Posterior cingulate gyrus (tissue), 11 donors: ENCODE measurements at regions of chr2 and their contacts with region 1.

Region 1: DNA sequence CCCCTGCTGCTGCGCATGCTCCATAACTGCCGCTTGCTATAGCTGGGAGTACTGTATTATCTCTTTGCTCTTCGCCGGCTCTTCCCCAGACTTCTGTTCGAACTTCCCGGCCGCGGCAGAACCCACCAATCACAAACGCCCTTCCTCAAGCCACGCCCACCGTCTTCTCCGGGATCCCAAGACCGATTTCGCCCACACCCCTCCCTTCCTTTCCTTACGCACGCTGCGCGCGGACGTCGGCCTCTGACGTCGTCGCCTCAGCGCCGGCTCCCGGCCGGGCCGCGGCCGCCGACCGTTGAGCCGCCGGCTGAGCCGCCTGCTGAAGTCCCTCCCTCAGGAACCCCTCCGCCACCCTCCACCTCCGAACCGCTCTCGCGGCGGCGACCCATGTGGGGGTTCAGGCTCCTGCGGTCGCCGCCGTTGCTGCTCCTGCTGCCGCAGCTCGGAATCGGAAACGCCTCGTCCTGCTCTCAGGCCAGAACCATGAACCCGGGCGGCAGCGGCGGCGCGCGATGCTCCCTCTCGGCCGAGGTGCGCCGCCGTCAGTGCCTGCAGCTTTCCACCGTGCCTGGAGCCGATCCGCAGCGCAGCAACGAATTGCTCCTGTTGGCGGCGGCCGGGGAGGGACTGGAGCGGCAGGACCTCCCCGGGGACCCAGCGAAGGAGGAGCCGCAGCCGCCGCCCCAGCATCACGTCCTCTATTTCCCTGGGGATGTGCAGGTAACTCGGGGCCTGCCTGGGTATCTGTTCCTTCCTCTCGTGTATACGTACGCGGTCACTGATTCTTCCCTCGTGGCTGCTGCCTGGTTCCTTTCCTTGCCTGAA is at the start of gene C2orf69:
- DNase-seq: peak; percentile 94 to 100 (median 97)

Region 2: DNA sequence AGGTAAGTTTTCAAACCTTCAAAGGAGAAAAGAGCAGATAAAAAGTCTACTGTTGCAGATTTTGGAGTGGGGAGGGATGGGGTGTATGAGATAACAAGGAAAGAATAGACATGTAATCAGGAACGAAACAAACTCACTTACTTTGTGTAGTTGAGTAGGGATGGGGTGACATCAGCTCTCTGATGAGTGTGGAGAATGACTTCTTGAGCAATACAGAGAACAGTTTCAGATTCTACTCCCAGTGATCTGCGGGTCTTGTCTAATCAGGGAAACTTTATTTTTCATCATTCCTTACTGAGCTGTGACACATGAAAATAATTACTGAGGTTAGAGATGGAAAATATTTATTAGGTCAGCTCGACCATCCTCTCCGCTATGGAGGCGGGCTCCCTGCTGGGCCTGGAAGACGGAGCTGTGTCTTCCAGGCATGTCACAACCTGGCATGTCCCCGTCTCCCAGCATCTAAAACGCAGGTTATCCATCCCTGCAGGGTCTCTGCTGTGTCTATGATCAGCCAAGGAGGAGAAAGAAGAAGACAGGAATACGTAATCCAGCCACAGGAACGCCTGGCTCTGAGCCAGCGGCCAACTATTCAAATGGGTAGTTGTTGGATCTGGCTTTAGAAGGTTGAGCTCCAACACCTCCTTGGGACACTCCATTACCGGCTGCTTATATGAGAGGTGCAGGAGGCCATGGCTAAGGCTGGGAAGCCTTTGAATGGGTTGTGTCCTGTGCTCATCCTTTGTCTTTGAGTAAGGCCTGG is 354.6 kb before region 1 on chr2:
- intact Hi-C with region 1: no loop called
- DNase-seq: no peak

Region 3: DNA sequence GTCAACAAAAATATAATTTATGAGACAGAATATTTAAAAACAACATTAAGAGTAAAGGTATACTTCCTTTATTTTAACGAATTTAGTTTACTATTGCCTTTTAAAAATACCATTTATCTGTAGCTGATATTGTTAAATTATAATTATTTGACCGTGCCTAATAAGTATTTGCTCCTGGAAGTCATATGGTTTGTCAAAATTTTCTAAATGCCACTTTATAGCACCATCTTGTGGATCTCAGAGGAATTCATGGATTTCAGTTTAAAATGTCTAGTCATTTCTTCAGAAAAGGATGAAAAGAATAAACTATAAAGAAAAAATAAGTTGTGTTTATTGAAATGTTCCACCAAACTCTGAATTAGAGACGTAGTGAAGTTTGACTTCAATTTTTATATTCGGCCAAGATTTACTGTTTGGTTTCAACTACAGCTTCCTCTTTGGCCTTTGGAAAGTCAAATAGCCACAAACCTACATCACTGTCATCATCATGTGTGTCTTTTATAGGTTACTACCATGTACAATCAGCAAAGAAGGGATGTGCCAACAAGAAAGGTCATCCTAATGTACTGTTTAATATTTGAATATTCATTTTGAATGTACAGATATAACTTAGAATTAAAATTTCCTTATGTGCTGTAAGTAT is 50.0 kb before region 1 on chr2:
- intact Hi-C with region 1: no loop called
- DNase-seq: no peak

Region 4: GRCh38 chr2:199932312-199932855 is 21.1 kb after region 1 on chr2:
- intact Hi-C with region 1: loop called (anchors 2 kb)
- DNase-seq: peak; percentile 43 to 96 (median 79)

Region 5: GRCh38 chr2:199955339-199956261 is 44.3 kb after region 1 on chr2 and contains the starts of genes MAIP1 and TYW5:
- intact Hi-C with region 1: loop called (anchors 2 kb)
- DNase-seq: peak; percentile 79 to 98 (median 84)

Region 6: GRCh38 chr2:200247494-200247893 is 336.2 kb after region 1 on chr2:
- intact Hi-C with region 1: no loop called
- DNase-seq: no peak